Heart left ventricle (tissue), 16 donors: ENCODE measurements at regions of chr18 and their contacts with region 1.

Region 1: DNA sequence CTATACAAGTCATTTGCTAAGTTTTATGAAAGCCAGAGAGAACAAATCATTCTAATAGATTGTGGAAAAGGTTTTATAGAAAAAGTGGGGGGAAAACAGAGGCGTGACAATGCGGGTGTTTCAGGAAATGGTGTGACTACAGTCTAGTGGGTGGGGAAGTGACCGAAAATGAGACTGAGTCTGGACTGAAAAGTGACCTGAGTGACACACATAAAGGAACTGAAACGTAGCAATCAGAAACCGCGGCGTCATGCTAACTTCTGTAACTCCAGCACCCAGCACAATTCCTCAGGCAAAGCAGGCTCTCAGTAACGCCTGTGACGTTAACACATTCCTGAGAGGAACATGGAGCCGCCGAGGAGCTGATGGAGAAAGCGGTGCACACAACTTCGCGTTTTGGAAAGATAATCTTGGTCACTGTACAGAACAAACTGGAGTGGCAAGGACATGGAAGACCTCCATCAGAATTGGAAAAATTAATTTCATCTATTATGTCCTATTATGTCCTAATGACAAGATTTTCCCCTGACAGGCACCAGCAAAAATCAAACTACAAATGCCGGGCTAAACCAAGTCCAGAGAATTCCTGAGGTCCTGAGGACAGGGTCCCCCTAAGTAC is 1.4 kb upstream of the CD226 start:
- DNase-seq: peak in 4 of 5 donors; percentile 27 to 55 (median 36)
- ATAC-seq: peak; percentile 74 to 88 (median 84)
- H3K4me3 ChIP-seq: peak overlapping the region in 8 of 12 donors; percentile 14 to 36 (median 26)
- H3K27ac ChIP-seq: peak overlapping the region in 3 of 12 donors; percentile 15 to 78 (median 25)
- H3K4me1 ChIP-seq: peaks cover 0 to 27% (median 9%) of the 10 kb centered on the region in 12 donors
- H3K27me3 ChIP-seq: no peaks in the 10 kb centered on the region
- CTCF ChIP-seq: no peak
- POLR2A ChIP-seq: no peak

Region 2: DNA sequence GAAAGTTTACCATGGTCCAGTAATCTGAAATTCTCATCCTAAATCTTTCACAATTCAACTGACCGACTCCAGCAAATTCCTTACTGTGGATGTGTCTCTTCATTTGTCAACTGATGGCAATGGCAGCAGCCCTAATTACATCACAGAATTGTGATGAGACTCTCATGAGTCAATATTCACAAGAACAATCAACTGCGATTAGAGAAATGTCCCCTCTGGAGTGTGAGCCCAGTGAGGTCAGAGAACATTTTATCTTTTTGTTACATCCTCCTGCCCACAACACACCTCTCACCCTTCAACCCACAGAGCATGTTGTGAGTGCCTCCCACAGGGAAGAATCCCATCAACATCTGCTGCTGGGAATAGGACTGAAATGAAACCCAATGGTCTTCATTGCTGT is 75.0 kb before region 1 on chr18:
- intact Hi-C with region 1: no loop called
- DNase-seq: no peak
- ATAC-seq: no peak
- H3K4me3 ChIP-seq: no peak overlapping the region
- H3K27ac ChIP-seq: no peak overlapping the region
- H3K4me1 ChIP-seq: no peaks in the 10 kb centered on the region
- H3K27me3 ChIP-seq: no peaks in the 10 kb centered on the region
- CTCF ChIP-seq: no peak
- POLR2A ChIP-seq: no peak

Region 3: GRCh38 chr18:69900941-69901340 is 48.1 kb before region 1 on chr18:
- intact Hi-C with region 1: no loop called
- DNase-seq: no peak
- ATAC-seq: no peak
- H3K4me3 ChIP-seq: no peak overlapping the region
- H3K27ac ChIP-seq: no peak overlapping the region
- H3K4me1 ChIP-seq: no peaks in the 10 kb centered on the region
- H3K27me3 ChIP-seq: no peaks in the 10 kb centered on the region
- CTCF ChIP-seq: peak in 2 of 12 donors; percentile 13 to 20
- POLR2A ChIP-seq: no peak

Region 4: DNA sequence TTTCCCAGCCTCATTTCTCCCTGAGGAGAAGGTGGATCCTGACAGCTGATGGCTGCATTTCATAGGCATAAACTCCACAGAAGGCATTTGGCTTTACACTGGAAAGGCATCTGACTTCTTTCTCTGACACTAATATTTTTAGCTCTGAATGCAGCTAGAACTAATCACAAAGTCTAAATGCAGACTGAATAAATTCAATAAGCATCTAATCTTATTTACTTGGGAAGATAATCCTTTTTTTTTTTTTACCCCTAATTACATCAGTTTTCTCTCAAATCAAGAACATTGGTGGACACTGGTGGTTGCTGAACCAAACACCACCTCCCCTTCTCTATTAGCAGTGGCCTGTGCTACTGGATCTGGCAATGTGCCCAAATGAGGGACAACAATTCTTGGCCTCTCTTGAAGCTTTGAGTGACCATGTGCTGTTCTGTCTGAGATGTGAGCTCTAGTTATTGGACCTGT is 49.5 kb after region 1 on chr18:
- intact Hi-C with region 1: loop called in 1 of 10 experiments (anchors 5 kb)
- DNase-seq: peak in 4 of 5 donors; percentile 30 to 62 (median 48)
- ATAC-seq: peak; percentile 91 to 93 (median 92)
- H3K4me3 ChIP-seq: no peak overlapping the region
- H3K27ac ChIP-seq: peak overlapping the region in 11 of 12 donors; percentile 17 to 86 (median 57)
- H3K4me1 ChIP-seq: peaks cover 0 to 35% (median 15%) of the 10 kb centered on the region in 12 donors
- H3K27me3 ChIP-seq: no peaks in the 10 kb centered on the region
- CTCF ChIP-seq: no peak
- POLR2A ChIP-seq: no peak